ENCODE measurements at regions of chr4 and their contacts with region 1.

Region 1: DNA sequence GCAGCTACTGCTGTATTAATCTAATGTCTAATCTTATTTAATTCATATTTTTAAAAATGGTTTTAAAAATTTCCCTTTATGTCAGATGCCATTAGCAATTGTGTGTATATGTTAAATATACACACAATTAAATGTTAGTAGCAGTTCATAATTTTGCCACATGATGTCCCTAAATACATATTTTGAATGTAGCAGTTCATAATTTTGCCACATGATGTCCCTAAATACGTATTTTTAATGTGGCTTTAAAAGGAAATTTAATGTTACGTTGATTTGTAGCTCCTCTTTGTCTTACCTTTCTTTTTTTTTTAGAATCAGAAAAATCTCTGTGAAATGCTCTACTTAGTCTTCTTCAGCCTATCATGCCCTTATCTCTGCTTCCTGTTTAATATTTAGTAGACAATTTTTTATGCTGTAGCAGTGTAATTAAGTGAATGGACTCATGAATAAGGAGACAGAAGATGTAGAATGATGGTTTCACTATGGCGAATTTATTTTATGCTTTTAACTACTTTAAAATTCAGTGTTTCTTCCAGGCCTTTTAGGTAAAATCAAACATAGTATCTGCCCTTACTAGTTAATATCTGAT is 26.1 kb downstream of the RBM46 start:
- DNase-seq: peak; percentile 15
- CTCF ChIP-seq: peak; percentile 38

Region 2: DNA sequence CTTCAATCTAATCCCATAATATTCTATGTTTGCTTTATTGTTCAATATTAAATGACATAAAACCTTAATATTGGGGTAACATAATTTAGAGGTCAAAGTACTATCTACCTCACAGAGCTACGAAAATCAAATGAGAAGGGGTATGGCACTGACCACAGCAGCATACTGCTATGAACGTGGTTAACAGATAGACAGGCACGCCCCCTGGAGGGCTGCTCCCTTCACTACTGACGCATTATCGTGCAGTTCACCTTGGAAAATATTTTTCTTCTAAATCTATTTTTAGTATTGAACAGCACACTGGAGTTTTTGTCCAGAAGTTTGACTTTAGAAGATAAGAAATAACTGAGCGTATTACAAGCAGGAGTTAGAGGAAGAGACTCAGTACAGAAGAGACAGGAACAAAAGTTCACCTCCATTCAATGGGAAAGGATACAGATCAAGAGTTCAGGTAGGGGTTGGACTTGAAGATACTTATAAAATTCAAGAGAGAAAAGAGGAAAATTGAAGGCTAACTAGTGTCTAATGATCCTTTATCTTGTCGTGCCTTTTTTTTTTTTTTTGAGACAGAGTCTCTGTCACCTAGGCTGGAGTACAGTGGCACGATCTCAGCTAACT is 546.9 kb after region 1 on chr4:
- in situ Hi-C with region 1: loop called (anchors 25 kb)
- DNase-seq: no peak
- CTCF ChIP-seq: peak; percentile 68